ENCODE measurements at regions of chr21 and their contacts with region 1.

Region 1: DNA sequence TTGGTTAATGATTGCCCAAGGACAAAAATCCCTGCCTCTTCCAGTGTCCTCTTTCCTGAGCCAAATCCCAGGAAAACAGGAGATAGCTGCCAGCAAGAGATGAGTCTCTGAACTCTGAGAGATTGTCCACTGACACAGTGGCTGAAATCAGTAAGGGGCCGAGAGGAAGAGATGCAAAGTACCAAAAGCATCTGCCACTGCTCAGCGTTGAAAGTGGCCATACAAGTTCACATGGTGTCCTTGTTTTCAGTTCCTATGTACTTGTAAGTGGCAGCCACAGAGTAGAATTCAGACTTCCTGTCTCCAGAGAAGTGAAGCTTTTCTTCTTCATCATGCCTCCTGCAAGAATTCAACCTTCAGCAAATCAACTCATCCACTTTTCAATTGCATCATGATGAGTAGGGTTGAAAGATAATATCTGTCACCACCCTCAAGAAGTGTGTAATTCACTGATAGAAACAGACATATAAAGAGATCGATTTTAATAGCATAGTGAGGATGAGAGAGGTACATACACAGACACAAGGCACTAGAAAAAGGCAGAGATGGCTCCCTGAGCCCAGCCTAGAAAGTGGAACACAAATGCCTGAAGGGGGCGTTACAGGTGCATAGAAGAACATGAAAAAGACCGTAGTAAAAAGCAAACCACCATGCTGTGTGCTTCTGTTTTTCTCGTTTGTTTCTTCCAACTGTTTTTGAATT is 185.8 kb downstream of the MRPL39 start:
- DNase-seq: no peak

Region 2: GRCh38 chr21:25501996-25502665 is 80.7 kb after region 1 on chr21:
- intact Hi-C with region 1: no loop called
- DNase-seq: no peak

Region 3: DNA sequence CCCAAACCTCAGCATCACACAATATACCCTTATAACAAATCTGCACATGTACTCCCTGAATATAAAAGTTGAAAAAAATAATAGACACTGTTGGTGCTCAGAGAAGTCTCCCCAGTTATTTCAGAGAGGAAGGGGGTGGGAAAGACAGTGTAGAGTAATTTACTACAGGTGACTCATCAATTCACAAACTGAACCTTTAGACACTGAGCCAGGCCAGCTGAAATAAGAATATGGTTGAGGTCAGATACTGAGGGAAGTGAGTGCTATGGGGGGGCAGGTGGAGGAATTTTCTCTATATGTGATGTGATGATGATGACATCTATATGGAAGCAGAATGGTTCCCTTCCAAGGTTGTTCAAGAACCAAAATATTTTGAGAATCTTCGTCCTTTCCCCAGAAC is 135.7 kb after region 1 on chr21:
- intact Hi-C with region 1: loop called (anchors 10 kb)
- DNase-seq: no peak